Ascending aorta (tissue), 2 donors: ENCODE measurements at regions of chr2 and their contacts with region 1.

Region 1: DNA sequence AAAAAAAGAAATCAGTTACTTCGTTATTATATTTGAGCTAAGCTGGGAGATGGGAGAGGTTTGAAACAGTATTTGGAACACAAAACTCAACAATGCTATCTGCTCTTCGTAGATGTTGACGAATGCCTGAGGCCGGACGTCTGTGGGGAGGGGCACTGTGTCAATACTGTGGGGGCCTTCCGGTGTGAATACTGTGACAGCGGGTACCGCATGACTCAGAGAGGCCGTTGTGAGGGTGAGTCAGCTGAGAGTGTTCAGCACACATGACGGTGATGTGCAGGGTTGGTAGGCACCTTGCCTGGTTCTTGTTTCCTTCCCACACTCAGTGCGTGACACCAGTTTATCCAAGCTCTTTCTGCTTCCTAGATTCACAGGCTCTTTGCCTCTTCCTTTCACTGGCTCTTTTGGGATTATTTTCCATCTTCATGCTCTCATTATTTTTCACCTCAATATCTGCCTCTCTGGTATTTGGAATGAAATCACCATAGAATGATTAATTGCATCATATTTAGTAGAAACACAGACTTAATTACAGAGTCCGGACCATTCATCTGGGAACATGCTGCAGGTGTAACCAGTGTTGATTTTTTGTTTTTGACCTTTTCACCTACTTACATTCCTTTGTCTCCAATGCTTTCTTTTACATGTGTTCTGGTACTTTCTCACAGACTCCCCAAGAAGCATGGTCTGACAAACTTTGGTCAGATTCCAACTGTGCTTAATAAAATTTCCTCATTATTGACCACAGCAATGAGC is 200.6 kb upstream of the RASGRP3 start:
- DNase-seq: peak; percentile 87 to 95
- H3K4me3 ChIP-seq: no peak overlapping the region
- H3K27ac ChIP-seq: peak overlapping the region; percentile 93
- H3K4me1 ChIP-seq: peaks cover 0 to 36% of the 10 kb centered on the region in 2 donors
- H3K27me3 ChIP-seq: no peaks in the 10 kb centered on the region
- CTCF ChIP-seq: no peak

Region 2: GRCh38 chr2:32772638-32773447 is 503.0 kb before region 1 on chr2:
- intact Hi-C with region 1: loop called (anchors 10 kb)
- DNase-seq: no peak
- H3K4me3 ChIP-seq: no peak overlapping the region
- H3K27ac ChIP-seq: no peak overlapping the region
- H3K4me1 ChIP-seq: no peaks in the 10 kb centered on the region
- H3K27me3 ChIP-seq: no peaks in the 10 kb centered on the region
- CTCF ChIP-seq: peak; percentile 52 to 68 (median 55)

Region 3: GRCh38 chr2:33134086-33134771 is 141.6 kb before region 1 on chr2:
- intact Hi-C with region 1: loop called (anchors 10 kb)
- DNase-seq: peak in 1 of 2 donors; percentile 93
- H3K4me3 ChIP-seq: peak overlapping the region; percentile 62 to 73
- H3K27ac ChIP-seq: peak overlapping the region; percentile 88 to 92
- H3K4me1 ChIP-seq: peaks cover 6 to 38% of the 10 kb centered on the region in 2 donors
- H3K27me3 ChIP-seq: no peaks in the 10 kb centered on the region
- CTCF ChIP-seq: peak in 1 of 3 experiments; percentile 17

Region 4: GRCh38 chr2:33229646-33230045 is 46.2 kb before region 1 on chr2:
- intact Hi-C with region 1: loop called (anchors 5 kb)
- DNase-seq: no peak
- H3K4me3 ChIP-seq: no peak overlapping the region
- H3K27ac ChIP-seq: peak overlapping the region; percentile 70 to 76
- H3K4me1 ChIP-seq: peaks cover 0 to 37% of the 10 kb centered on the region in 2 donors
- H3K27me3 ChIP-seq: no peaks in the 10 kb centered on the region
- CTCF ChIP-seq: no peak

Region 5: DNA sequence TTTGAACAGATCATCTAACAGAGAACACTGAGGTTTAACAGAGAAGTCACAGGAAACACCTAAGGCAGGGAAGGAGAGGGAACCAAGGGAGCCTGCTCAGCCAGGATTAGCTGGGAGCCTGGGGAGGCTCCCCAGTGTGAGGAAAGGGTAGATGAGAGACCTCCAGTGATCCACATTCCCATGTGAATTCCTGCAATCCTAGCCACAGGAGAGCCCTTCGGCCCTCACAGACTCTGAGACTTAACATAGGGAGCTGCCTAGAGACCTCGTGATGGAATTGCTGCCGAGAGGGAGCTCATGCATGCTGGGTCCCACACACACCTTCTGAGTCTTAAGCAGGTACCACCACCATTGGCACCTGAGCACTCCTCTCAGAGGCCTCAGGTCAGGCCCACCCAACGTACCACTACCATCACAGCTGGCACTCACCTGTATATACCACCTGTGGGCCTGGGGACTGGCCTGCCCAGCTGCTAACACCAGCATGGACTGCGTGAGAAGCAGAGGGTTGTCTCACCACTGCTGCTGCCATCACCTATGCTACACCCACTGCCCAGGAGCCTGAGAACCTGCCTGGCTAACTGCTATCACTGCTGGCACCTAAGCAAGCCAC is 25.3 kb before region 1 on chr2:
- intact Hi-C with region 1: no loop called
- DNase-seq: no peak
- H3K4me3 ChIP-seq: no peak overlapping the region
- H3K27ac ChIP-seq: peak overlapping the region; percentile 53 to 60
- H3K4me1 ChIP-seq: peaks cover 0 to 18% of the 10 kb centered on the region in 2 donors
- H3K27me3 ChIP-seq: no peaks in the 10 kb centered on the region
- CTCF ChIP-seq: no peak

Region 6: GRCh38 chr2:33441235-33441810 is 165.5 kb after region 1 on chr2:
- intact Hi-C with region 1: loop called (anchors 5 kb)
- DNase-seq: peak in 1 of 2 donors; percentile 80
- H3K4me3 ChIP-seq: no peak overlapping the region
- H3K27ac ChIP-seq: no peak overlapping the region
- H3K4me1 ChIP-seq: peaks cover 5 to 7% of the 10 kb centered on the region in 2 donors
- H3K27me3 ChIP-seq: no peaks in the 10 kb centered on the region
- CTCF ChIP-seq: peak; percentile 62 to 87 (median 75)